ENCODE measurements at regions of chr2 and their contacts with region 1.

Region 1: DNA sequence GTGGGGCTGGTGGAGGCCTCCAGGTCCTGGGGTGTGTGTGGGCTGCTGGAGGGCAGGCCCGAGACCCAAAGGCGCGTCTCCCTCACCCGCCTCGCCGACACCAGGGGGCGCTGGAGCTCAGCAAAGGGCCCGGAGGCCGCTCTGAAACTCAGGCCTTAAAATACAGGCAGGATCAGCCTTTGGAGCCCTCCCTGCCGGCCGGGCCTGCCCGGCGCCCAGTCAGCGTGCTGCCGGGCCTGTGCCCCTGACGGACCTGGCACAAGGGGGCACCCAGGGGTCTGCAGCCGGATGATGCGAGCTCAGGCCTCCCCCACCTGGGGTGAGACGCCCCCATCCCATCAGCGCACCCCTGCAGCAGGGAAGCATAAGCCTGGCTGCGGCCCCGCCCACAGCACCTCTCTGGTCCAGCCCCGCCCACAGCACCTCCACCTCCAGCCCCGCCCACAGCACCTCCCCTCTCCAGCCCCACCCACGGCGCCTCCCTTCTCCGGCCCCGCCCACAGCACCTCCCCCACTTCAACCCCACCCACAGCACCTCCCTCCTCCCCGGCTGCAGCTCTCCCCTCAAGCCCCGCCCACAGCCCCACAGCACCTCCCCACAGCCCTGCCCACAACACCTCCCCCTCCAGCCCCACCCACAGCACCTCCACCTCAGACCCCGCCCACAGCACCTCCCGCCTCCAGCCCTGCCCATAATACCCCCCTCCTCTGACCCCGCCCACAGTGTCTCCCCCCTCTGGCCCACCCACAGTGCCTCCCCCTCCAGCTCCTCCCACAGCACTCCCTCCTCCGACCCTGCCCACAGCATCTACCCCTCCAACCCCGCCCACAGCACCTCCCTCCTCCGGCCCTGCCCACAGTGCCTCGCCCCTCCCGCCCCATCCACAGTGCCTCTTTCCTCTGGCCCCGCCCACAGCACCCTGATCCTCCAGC is 92.8 kb upstream of the OTOS start:
- DNase-seq: peak; percentile 97
- ATAC-seq: peak; percentile 84
- H3K4me3 Mint-ChIP-seq: peak overlapping the region; percentile 57
- H3K27ac Mint-ChIP-seq: no peak overlapping the region
- H3K4me1 Mint-ChIP-seq: peaks cover 10% of the 10 kb centered on the region
- H3K27me3 Mint-ChIP-seq: peaks cover 8% of the 10 kb centered on the region; the same call in 1 of the 2 replicates
- CTCF ChIP-seq: peak; percentile 75

Region 2: GRCh38 chr2:240149943-240150784 is 83.1 kb before region 1 on chr2:
- CTCF ChIA-PET with region 1: interaction called, 20 read pairs
- POLR2A ChIA-PET with region 1: no interaction called
- DNase-seq: peak; percentile 80
- ATAC-seq: peak; percentile 92
- H3K4me3 Mint-ChIP-seq: no peak overlapping the region
- H3K27ac Mint-ChIP-seq: no peak overlapping the region; the same call in 1 of the 2 replicates
- H3K4me1 Mint-ChIP-seq: no peaks in the 10 kb centered on the region
- H3K27me3 Mint-ChIP-seq: no peaks in the 10 kb centered on the region
- CTCF ChIP-seq: peak; percentile 64

Region 3: DNA sequence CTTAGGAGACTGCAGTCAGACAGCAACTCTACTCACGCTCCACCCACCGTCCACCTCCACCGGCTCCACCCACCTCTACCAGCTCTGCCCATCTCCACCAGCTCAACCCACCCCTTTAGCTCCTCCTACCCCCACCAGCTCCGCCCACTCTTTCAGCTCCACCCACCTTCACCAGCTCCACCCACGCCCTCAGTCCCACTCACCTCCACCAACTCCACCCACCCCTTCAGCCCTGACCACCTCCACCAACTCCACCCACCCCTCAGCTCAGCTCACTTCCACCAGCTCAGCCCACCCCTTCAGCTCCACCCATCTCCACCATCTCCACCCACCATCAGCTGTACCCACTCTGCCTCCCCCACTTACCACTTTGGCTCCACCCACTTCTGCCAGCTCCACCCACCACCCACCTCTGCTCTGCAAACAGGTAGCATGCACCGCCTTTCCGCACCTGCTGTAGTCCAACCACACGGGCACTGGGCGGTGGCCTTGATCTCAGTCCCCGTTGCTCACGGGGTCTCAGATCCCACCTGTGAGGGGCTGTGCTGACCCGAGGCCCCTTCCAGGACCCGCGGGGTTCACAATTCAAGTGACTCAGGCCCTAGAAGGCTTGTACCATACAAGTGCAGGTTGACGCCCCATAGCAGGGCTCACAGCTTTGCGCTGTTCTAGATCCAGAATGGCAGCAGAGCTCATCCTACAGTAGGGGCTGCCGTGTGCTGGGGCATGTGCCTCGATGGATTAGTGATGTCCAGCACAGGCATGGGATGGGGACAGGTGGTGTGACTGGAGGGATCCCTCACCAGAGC is 15.6 kb before region 1 on chr2:
- CTCF ChIA-PET with region 1: interaction called, 19 read pairs
- POLR2A ChIA-PET with region 1: no interaction called
- DNase-seq: peak; percentile 44
- ATAC-seq: peak; percentile 80
- H3K4me3 Mint-ChIP-seq: no peak overlapping the region
- H3K27ac Mint-ChIP-seq: no peak overlapping the region
- H3K4me1 Mint-ChIP-seq: no peaks in the 10 kb centered on the region
- H3K27me3 Mint-ChIP-seq: no peaks in the 10 kb centered on the region; the same call in none of the 2 replicates
- CTCF ChIP-seq: no peak

Region 4: GRCh38 chr2:240434728-240435456 is 201.7 kb after region 1 on chr2:
- CTCF ChIA-PET with region 1: interaction called, 14 read pairs
- POLR2A ChIA-PET with region 1: no interaction called
- DNase-seq: peak; percentile 91
- ATAC-seq: peak; percentile 54
- H3K4me3 Mint-ChIP-seq: peak overlapping the region; percentile 81
- H3K27ac Mint-ChIP-seq: no peak overlapping the region
- H3K4me1 Mint-ChIP-seq: peaks cover 6% of the 10 kb centered on the region; the same call in 1 of the 2 replicates
- H3K27me3 Mint-ChIP-seq: peaks cover 34% of the 10 kb centered on the region
- CTCF ChIP-seq: no peak

Region 5: DNA sequence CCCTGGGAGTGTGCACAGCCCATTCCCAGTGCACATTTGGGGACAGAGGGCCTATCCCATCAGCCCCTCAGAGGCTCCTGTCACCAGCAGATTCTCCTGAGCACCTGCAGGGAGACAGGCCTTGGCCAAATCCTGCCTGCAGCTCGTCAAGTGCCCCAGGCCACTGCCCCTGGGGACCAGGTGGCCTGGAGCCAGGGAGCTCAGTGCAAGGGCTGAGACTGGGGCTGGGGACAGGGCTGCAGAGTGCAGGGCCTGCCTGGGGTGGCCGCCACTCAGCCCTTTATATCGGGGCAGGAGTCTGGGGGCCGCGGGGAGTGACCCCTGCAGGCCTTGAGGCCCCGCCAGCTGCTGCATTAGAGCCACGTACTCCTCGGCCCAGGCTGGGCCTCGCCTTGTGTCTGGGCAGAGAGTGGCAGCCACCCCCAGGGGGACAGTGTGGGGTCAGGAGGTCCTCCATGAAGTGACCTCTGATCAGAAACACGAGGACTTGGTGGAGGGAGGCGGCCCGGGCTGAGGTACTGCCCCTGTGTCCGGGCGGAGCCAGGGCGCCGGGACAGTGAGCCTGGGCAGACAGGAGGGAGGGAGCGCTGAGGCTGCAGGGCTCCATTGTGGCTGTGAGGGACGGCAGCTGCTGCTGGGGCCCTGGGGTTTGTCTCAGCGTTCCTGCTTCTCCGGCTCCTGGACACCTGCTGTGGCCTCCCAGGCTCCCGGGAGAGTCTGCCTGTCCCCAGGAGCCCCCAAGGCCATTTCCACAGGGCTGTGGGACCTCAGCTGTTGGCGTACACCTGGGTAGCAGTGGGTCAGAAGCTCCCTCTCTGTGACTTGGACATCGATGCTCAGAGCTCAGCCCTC is 226.4 kb after region 1 on chr2:
- CTCF ChIA-PET with region 1: interaction called, 14 read pairs
- POLR2A ChIA-PET with region 1: no interaction called
- DNase-seq: peak; percentile 16
- ATAC-seq: no peak
- H3K4me3 Mint-ChIP-seq: no peak overlapping the region
- H3K27ac Mint-ChIP-seq: no peak overlapping the region
- H3K4me1 Mint-ChIP-seq: peaks cover 22% of the 10 kb centered on the region
- H3K27me3 Mint-ChIP-seq: peaks cover 20% of the 10 kb centered on the region
- CTCF ChIP-seq: no peak

Measured in WTC11 (cell line).